Activated B cell treated with CpG ODN at 0.5 μM for 24 hours (primary cell): ENCODE measurements at regions of chr17 and their contacts with region 1.

Region 1: GRCh38 chr17:7045909-7046724 is 2.2 kb upstream of the SLC16A11 start:
- DNase-seq: peak; percentile 30
- ATAC-seq: peak; percentile 11
- H3K4me3 Mint-ChIP-seq: peak overlapping the region; percentile 81
- H3K27ac Mint-ChIP-seq: peak overlapping the region; percentile 86
- H3K4me1 Mint-ChIP-seq: peaks cover 45% of the 10 kb centered on the region
- H3K27me3 Mint-ChIP-seq: no peaks in the 10 kb centered on the region
- CTCF ChIP-seq: no peak

Region 2: GRCh38 chr17:6913608-6914443 is 132.3 kb before region 1 on chr17:
- CTCF ChIA-PET with region 1: interaction called, 9 read pairs
- POLR2A ChIA-PET with region 1: no interaction called
- intact Hi-C with region 1: loop called (anchors 1 kb)
- DNase-seq: peak; percentile 77
- ATAC-seq: peak; percentile 89
- H3K4me3 Mint-ChIP-seq: peak overlapping the region; percentile 83
- H3K27ac Mint-ChIP-seq: no peak overlapping the region
- H3K4me1 Mint-ChIP-seq: peaks cover 18% of the 10 kb centered on the region
- H3K27me3 Mint-ChIP-seq: peaks cover 24% of the 10 kb centered on the region
- CTCF ChIP-seq: peak; percentile 38

Region 3: GRCh38 chr17:6981426-6981825 is 64.7 kb before region 1 on chr17:
- CTCF ChIA-PET with region 1: no interaction called
- POLR2A ChIA-PET with region 1: no interaction called
- intact Hi-C with region 1: no loop called
- DNase-seq: no peak
- ATAC-seq: no peak
- H3K4me3 Mint-ChIP-seq: no peak overlapping the region
- H3K27ac Mint-ChIP-seq: no peak overlapping the region
- H3K4me1 Mint-ChIP-seq: peaks cover 4% of the 10 kb centered on the region
- H3K27me3 Mint-ChIP-seq: no peaks in the 10 kb centered on the region
- CTCF ChIP-seq: no peak

Region 4: GRCh38 chr17:7021993-7022778 is 23.9 kb before region 1 on chr17:
- CTCF ChIA-PET with region 1: interaction called, 18 read pairs
- POLR2A ChIA-PET with region 1: interaction called, 10 read pairs
- intact Hi-C with region 1: loop called (anchors 1 kb)
- DNase-seq: peak; percentile 87
- ATAC-seq: peak; percentile 77
- H3K4me3 Mint-ChIP-seq: peak overlapping the region; percentile 82
- H3K27ac Mint-ChIP-seq: peak overlapping the region; percentile 85
- H3K4me1 Mint-ChIP-seq: peaks cover 27% of the 10 kb centered on the region
- H3K27me3 Mint-ChIP-seq: no peaks in the 10 kb centered on the region
- CTCF ChIP-seq: peak; percentile 63

Region 5: DNA sequence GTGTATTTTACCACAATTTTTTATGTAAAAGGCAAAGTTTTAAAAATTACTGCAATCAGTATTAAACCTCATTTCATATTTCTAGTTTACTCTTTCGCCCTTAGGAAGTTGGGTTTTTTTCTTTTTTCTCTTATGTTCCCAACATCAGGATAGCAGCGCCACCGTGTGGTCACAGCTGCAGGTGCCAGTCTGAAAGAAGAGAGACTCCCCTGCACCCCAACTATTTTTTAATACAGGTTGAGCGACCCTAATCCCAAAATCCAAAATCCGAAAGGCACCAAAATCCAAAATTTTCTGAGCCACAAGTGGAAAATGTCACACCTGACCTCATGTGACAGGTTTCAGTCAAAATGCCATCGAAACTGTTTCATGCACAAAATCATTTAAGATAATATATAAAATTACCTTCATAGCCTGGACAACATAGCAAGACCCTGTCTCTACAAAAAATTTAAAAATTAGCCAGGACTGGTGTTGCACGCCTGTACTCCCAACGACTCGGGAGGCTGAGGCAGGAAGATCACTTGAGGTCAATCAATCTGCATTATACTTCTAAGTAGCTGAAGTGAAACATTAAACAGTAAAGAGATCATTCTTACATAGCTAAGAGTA is 90.3 kb after region 1 on chr17:
- CTCF ChIA-PET with region 1: interaction called, 109 read pairs
- POLR2A ChIA-PET with region 1: interaction called, 29 read pairs
- intact Hi-C with region 1: loop called (anchors 1 kb)
- DNase-seq: peak; percentile 60
- ATAC-seq: no peak
- H3K4me3 Mint-ChIP-seq: no peak overlapping the region
- H3K27ac Mint-ChIP-seq: no peak overlapping the region
- H3K4me1 Mint-ChIP-seq: peaks cover 27% of the 10 kb centered on the region
- H3K27me3 Mint-ChIP-seq: peaks cover 9% of the 10 kb centered on the region
- CTCF ChIP-seq: no peak

Region 6: GRCh38 chr17:7204828-7205461 is 158.8 kb after region 1 on chr17:
- CTCF ChIA-PET with region 1: no interaction called
- POLR2A ChIA-PET with region 1: no interaction called
- intact Hi-C with region 1: loop called (anchors 1 kb)
- DNase-seq: peak; percentile 95
- ATAC-seq: peak; percentile 88
- H3K4me3 Mint-ChIP-seq: peak overlapping the region; percentile 87
- H3K27ac Mint-ChIP-seq: peak overlapping the region; percentile 94
- H3K4me1 Mint-ChIP-seq: peaks cover 30% of the 10 kb centered on the region
- H3K27me3 Mint-ChIP-seq: no peaks in the 10 kb centered on the region
- CTCF ChIP-seq: no peak

Region 7: DNA sequence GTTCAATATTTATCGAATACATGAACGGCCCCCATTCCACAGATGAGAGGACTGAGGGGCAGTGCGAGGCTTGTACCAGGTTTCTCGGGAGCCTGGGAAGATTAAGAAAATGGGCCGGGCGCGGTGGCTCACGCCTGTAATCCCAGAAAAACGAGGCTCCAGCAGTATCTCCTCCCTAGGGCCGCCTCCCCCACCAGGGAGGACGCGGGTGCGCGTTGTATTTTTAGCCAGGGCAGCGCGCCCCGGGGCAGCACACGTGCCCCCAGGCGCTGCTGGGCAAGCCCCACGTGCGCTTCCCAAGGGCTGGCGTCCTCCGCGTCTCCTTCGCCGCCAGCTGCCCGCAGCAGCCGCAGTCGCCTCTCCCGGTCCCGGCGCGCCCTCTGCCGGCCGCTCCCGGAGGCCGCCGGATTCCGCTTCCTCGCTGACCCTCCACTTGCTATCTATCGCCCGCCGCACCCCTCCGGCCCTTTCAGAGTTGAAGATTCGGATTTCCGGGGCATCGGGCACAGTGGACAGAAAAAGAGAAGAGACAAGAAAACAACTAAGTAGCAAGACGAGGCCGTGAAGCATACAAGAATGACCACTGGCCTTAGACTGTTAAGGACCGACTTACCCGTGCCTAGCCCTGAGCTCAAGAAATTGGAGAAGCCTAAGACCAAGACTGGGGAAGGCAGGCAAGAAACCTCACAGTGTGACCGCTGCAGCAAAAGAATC is 250.2 kb after region 1 on chr17:
- CTCF ChIA-PET with region 1: interaction called, 35 read pairs
- POLR2A ChIA-PET with region 1: interaction called, 4 read pairs
- intact Hi-C with region 1: loop called (anchors 1 kb)
- DNase-seq: peak; percentile 75
- ATAC-seq: peak; percentile 49
- H3K4me3 Mint-ChIP-seq: peak overlapping the region; percentile 32
- H3K27ac Mint-ChIP-seq: no peak overlapping the region
- H3K4me1 Mint-ChIP-seq: peaks cover 24% of the 10 kb centered on the region
- H3K27me3 Mint-ChIP-seq: peaks cover 18% of the 10 kb centered on the region
- CTCF ChIP-seq: peak; percentile 29